ENCODE measurements at regions of chr9 and their contacts with region 1.

Region 1: GRCh38 chr9:129737479-129738274 is 15.2 kb downstream of the PTGES start:
- DNase-seq: peak; percentile 51
- ATAC-seq: peak; percentile 90
- H3K4me3 ChIP-seq: peak overlapping the region; percentile 38 to 61
- H3K27ac ChIP-seq: peak overlapping the region; percentile 77
- H3K4me1 ChIP-seq: peaks cover 7 to 17% of the 10 kb centered on the region in 2 experiments; a peak in 3 of 4 replicates
- H3K27me3 ChIP-seq: no peaks in the 10 kb centered on the region
- CTCF ChIP-seq: peak; percentile 86 to 96 (median 92)
- POLR2A ChIP-seq: no peak
- RAD21 ChIP-seq: peak; percentile 98

Region 2: DNA sequence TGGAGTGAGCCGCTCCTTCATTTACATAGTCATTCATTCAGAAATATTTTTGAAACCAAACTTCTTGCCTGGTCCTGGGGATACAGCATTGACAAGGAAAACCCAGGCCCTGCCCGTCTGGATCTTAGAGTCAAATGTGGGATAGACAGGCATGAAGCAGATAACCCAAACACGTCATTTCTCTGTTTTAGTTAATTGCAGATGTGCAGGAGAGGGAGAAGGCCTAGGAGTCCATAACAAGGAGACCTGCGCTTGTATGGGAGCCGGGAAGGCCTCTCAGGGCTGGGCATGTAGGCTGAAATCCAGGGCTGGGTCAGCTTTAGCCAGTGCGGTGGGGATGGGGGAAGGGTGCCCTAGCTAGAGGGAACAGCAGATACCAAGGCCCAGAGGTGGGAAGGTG is 28.9 kb before region 1 on chr9:
- CTCF ChIA-PET with region 1: no interaction called
- POLR2A ChIA-PET with region 1: no interaction called
- RAD21 ChIA-PET with region 1: no interaction called
- intact Hi-C with region 1: no loop called
- DNase-seq: no peak
- ATAC-seq: no peak
- H3K4me3 ChIP-seq: no peak overlapping the region
- H3K27ac ChIP-seq: no peak overlapping the region
- H3K4me1 ChIP-seq: no peaks in the 10 kb centered on the region
- H3K27me3 ChIP-seq: no peaks in the 10 kb centered on the region
- CTCF ChIP-seq: no peak
- POLR2A ChIP-seq: no peak
- RAD21 ChIP-seq: no peak

Region 3: DNA sequence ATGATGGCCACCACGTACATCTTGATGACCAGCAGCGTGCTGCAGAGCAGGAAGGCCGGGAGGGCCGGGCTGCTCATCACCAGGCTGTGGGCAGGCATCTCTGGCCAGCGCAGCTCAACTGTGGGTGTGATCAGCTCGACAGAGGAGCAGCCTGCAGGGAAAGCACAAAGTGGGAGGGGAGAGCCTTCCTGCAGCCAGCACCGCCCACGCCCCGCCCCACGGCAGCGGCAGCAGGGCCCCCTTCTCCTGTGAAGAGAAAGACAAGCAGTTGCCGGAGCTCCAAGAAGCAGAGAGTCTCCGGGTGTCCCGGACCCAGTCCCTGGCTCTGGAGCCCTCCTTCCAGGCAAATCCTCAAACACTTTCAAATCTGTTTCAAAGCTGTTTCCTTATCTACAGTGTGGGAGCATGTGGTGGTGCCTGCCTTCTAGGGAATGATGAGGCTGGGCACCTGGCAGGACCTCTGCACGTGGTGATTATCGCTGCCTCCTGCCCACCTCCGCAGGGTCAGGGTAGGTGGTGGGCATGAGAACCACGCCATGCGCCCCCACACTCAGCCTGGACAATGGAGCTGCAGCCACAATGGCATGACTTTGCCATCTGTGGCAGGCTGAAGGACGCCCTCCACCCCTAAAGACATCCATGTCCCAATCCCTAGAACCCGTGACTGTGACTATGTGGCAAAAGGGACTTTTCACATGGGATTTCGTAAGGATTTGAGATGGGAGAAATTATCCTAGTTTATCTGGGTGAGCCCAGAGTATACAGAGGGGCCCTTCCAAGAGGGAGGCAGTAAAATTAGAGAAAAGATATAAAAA is 15.4 kb after region 1 on chr9 and contains the start of gene PTGES:
- CTCF ChIA-PET with region 1: interaction called, 13 read pairs
- POLR2A ChIA-PET with region 1: interaction called, 7 read pairs
- RAD21 ChIA-PET with region 1: no interaction called
- intact Hi-C with region 1: no loop called
- DNase-seq: peak; percentile 40
- ATAC-seq: peak; percentile 90
- H3K4me3 ChIP-seq: peak within 1 kb of the TSS; percentile 53 to 83
- H3K27ac ChIP-seq: peak within 1 kb of the TSS; percentile 55
- H3K4me1 ChIP-seq: peaks cover 32 to 53% of the 10 kb centered on the region in 2 experiments
- H3K27me3 ChIP-seq: no peaks in the 10 kb centered on the region
- CTCF ChIP-seq: no peak
- POLR2A ChIP-seq: no peak
- RAD21 ChIP-seq: no peak
- total RNA-seq, gene PTGES: 17.2 TPM

Region 4: DNA sequence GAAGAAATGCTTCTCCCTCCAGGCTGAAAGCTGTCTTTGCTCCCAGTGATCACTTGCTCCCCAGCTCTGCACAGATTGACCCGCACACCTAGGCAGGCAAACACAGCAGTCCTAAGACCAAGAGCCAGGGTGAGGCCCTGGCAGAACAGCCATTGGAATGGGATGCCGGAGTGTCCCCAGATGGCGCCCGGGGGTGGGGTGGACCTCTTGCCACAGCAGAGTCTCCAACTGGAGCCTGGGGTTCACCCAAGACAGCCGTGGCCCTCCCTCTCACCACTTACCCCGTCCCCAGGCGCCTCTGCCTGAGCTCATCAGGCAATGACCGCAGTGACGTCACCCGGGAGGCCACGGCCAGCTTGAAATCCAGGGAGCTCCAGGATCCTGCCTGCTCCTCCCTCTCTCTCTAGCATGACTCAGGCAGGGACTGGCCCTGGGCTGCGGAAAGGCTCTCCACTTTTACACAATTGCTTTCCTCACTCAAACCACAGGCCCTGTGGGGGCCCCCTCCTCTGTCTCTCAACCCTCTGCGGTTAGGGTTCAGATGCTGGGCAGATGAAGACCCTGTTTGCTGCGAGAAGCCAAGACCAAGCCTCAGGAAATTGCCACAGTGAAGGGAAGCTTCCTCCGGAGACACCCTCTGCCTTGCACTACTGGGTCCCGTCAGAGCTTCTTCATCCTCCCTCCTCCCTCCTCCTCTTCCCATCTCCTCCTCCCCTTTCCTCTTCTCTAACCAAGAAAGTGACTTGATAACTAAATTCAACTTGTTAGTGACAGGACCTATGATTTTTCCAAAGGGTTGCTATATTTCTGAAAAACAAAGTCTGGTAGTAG is 39.5 kb after region 1 on chr9:
- CTCF ChIA-PET with region 1: interaction called, 42 read pairs
- POLR2A ChIA-PET with region 1: interaction called, 11 read pairs
- RAD21 ChIA-PET with region 1: interaction called, 7 to 9 read pairs
- intact Hi-C with region 1: no loop called
- DNase-seq: peak; percentile 89
- ATAC-seq: peak; percentile 98
- H3K4me3 ChIP-seq: peak overlapping the region; percentile 47 to 57
- H3K27ac ChIP-seq: peak overlapping the region; percentile 71
- H3K4me1 ChIP-seq: peaks cover 26 to 29% of the 10 kb centered on the region in 2 experiments
- H3K27me3 ChIP-seq: no peaks in the 10 kb centered on the region
- CTCF ChIP-seq: no peak
- POLR2A ChIP-seq: no peak
- RAD21 ChIP-seq: no peak